ENCODE measurements at regions of chr6 and their contacts with region 1.

Region 1: GRCh38 chr6:107114213-107114905 is 956 bp downstream of the BEND3 start:
- DNase-seq: peak; percentile 81 to 92
- ATAC-seq: peak; percentile 89 to 96 (median 95)
- H3K4me3 ChIP-seq: peak overlapping the region in 9 of 10 donors; percentile 67 to 88 (median 70)
- H3K27ac ChIP-seq: peak overlapping the region in 9 of 10 donors; percentile 23 to 72 (median 64)
- H3K4me1 ChIP-seq: peaks cover 2 to 31% (median 18%) of the 10 kb centered on the region in 9 donors
- H3K27me3 ChIP-seq: peaks cover 0 to 25% (median 0%) of the 10 kb centered on the region in 7 donors
- CTCF ChIP-seq: peak; percentile 75 to 95 (median 92)

Region 2: GRCh38 chr6:106739387-106739786 is 375.0 kb before region 1 on chr6:
- intact Hi-C with region 1: no loop called
- DNase-seq: peak; percentile 18 to 75
- ATAC-seq: peak; percentile 86 to 98 (median 96)
- H3K4me3 ChIP-seq: no peak overlapping the region
- H3K27ac ChIP-seq: no peak overlapping the region
- H3K4me1 ChIP-seq: peaks cover 0 to 5% (median 0%) of the 10 kb centered on the region in 9 donors
- H3K27me3 ChIP-seq: no peaks in the 10 kb centered on the region
- CTCF ChIP-seq: peak in 2 of 9 donors; percentile 24 to 30

Region 3: GRCh38 chr6:107021446-107022185 is 92.7 kb before region 1 on chr6:
- intact Hi-C with region 1: loop called in 4 of 10 experiments (anchors 5 to 10 kb)
- DNase-seq: no peak
- ATAC-seq: no peak
- H3K4me3 ChIP-seq: no peak overlapping the region
- H3K27ac ChIP-seq: no peak overlapping the region
- H3K4me1 ChIP-seq: peaks cover 0 to 8% (median 7%) of the 10 kb centered on the region in 9 donors
- H3K27me3 ChIP-seq: no peaks in the 10 kb centered on the region
- CTCF ChIP-seq: no peak

Region 4: GRCh38 chr6:107026965-107027364 is 87.4 kb before region 1 on chr6:
- intact Hi-C with region 1: loop called in 8 of 10 experiments (anchors 1 to 10 kb)
- DNase-seq: no peak
- ATAC-seq: no peak
- H3K4me3 ChIP-seq: no peak overlapping the region
- H3K27ac ChIP-seq: no peak overlapping the region
- H3K4me1 ChIP-seq: peaks cover 2 to 24% (median 20%) of the 10 kb centered on the region in 9 donors
- H3K27me3 ChIP-seq: no peaks in the 10 kb centered on the region
- CTCF ChIP-seq: no peak

Region 5: DNA sequence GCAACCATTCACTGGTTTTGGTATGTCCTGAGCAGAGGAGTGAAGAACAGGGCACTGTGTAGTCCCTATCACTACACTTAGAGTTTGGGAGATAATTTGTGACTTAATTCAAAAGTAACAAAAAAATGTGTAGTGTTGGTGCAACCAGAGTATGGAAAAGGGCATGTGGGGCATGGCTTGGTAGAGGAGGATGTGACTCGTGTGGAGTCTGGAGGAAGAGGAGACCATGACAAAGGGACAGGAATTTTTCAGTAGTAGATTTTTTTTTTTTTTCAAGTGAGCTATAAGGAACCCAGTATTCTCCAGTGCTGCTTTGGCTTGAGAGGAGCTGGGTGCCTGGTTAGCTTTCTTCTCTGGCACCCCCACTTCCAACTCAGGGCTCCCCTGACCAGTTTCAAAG is 81.2 kb before region 1 on chr6:
- intact Hi-C with region 1: loop called in 7 of 10 experiments (anchors 1 to 10 kb)
- DNase-seq: no peak
- ATAC-seq: no peak
- H3K4me3 ChIP-seq: no peak overlapping the region
- H3K27ac ChIP-seq: no peak overlapping the region
- H3K4me1 ChIP-seq: peaks cover 2 to 24% (median 20%) of the 10 kb centered on the region in 9 donors
- H3K27me3 ChIP-seq: no peaks in the 10 kb centered on the region
- CTCF ChIP-seq: no peak

Region 6: GRCh38 chr6:107093644-107094043 is 20.7 kb before region 1 on chr6:
- intact Hi-C with region 1: no loop called
- DNase-seq: no peak
- ATAC-seq: no peak
- H3K4me3 ChIP-seq: no peak overlapping the region
- H3K27ac ChIP-seq: no peak overlapping the region
- H3K4me1 ChIP-seq: no peaks in the 10 kb centered on the region
- H3K27me3 ChIP-seq: no peaks in the 10 kb centered on the region
- CTCF ChIP-seq: no peak

Measured in heart right ventricle (tissue), 16 donors.